GM10248 (cell line): ENCODE measurements at regions of chr6 and their contacts with region 1.

Region 1: GRCh38 chr6:31128093-31128676 is 7.9 kb upstream of the CDSN start:
- DNase-seq: peak; percentile 81
- CTCF ChIP-seq: peak; percentile 76

Region 2: DNA sequence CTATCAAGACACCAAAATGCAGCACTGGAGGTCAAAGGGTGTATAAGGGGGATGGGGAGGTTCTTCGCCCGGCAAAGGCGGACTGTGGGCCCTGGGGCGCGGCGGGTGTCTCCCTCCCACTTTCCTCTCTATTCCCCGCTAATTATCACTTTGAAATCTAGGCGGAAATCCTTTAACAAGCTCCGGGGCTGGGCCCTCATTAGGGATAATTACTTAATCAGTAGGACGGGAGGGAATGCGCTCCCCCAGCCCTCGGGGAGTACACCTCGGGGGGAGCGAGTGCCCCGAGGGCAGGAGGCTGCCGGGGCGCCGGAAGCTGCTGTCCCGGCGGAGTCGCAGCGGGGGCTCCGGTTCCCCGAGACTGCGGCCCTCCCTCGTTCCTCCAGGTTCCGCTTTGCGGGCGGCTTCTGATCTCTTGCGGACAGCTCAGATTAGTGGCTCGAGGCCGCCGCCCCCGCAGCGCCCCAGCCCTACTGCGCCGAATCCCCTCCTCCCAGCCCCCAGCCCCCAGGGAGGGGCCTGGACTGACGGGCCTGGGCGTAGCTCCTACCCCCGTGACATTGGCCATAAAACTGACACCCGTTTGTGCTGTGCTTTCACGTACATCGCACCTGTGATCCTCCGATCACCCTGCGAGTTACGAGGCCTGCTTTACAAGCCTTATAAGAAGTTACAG is 172.7 kb before region 1 on chr6:
- CTCF ChIA-PET with region 1: no interaction called
- POLR2A ChIA-PET with region 1: no interaction called
- DNase-seq: peak; percentile 82
- CTCF ChIP-seq: no peak

Region 3: GRCh38 chr6:31114970-31115849 is 13.0 kb before region 1 on chr6:
- CTCF ChIA-PET with region 1: interaction called, 72 read pairs
- POLR2A ChIA-PET with region 1: no interaction called
- DNase-seq: no peak
- CTCF ChIP-seq: no peak

Region 4: GRCh38 chr6:31143148-31143547 is 15.0 kb after region 1 on chr6:
- CTCF ChIA-PET with region 1: interaction called, 21 read pairs
- POLR2A ChIA-PET with region 1: no interaction called
- DNase-seq: no peak
- CTCF ChIP-seq: no peak

Region 5: DNA sequence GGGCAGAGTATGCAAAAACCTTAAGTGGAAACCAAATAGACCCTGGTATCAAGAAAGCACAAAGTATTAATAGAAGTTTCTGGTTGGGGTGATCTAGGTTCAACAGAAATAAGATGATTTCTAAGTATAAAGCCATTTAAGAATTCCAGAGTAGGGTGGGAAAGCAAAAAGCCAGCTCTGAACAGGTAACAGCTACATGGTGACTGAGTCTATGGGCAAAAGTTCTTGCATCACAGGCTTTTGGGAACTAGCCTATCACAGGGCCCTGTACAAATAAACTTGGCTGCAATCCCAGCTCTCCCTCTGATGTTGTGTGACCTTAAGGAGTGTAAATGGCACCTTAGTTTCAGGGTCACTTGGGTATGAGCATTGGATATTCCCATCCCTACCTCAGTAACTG is 35.7 kb after region 1 on chr6:
- CTCF ChIA-PET with region 1: interaction called, 11 read pairs
- POLR2A ChIA-PET with region 1: no interaction called
- DNase-seq: no peak
- CTCF ChIP-seq: no peak